Heart right ventricle (tissue), 16 donors: ENCODE measurements at regions of chr7 and their contacts with region 1.

Region 1: GRCh38 chr7:842431-843031 is 10.3 kb downstream of the SUN1 start:
- DNase-seq: no peak
- ATAC-seq: peak in 7 of 8 donors; percentile 32 to 88 (median 70)
- H3K4me3 ChIP-seq: no peak overlapping the region
- H3K27ac ChIP-seq: peak overlapping the region in 5 of 10 donors; percentile 1 to 61 (median 51)
- H3K4me1 ChIP-seq: peaks cover 4 to 37% (median 23%) of the 10 kb centered on the region in 9 donors
- H3K27me3 ChIP-seq: no peaks in the 10 kb centered on the region
- CTCF ChIP-seq: no peak

Region 2: GRCh38 chr7:859359-860030 is 17.0 kb after region 1 on chr7:
- intact Hi-C with region 1: loop called in 1 of 10 experiments (anchors 2 kb)
- DNase-seq: no peak
- ATAC-seq: peak in 1 of 8 donors; percentile 22
- H3K4me3 ChIP-seq: no peak overlapping the region
- H3K27ac ChIP-seq: no peak overlapping the region
- H3K4me1 ChIP-seq: no peaks in the 10 kb centered on the region
- H3K27me3 ChIP-seq: no peaks in the 10 kb centered on the region
- CTCF ChIP-seq: no peak

Region 3: GRCh38 chr7:1733206-1733907 is 890.8 kb after region 1 on chr7:
- intact Hi-C with region 1: no loop called
- DNase-seq: no peak
- ATAC-seq: peak in 7 of 8 donors; percentile 21 to 90 (median 46)
- H3K4me3 ChIP-seq: no peak overlapping the region
- H3K27ac ChIP-seq: no peak overlapping the region
- H3K4me1 ChIP-seq: no peaks in the 10 kb centered on the region
- H3K27me3 ChIP-seq: no peaks in the 10 kb centered on the region
- CTCF ChIP-seq: peak in 1 of 9 donors; percentile 11